Right ventricle myocardium superior (tissue), 1 donor: ENCODE measurements at regions of chr10 and their contacts with region 1.

Region 1: DNA sequence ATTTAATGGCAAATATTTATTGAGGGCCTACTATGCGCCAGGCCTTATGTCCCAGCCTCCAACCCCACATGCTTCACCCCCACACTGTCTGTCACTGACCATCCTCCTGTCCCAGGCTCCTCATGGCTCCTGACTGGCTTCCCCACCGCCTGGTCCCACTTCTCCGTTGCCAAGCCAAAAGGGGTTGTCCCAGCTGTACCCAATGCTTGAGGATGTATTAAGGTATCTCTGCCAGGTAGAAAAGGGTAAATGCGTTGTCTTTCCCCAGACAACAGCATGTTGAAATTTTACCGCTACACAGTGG is 168.8 kb upstream of the FRMD4A start:
- DNase-seq: no peak
- ATAC-seq: no peak

Region 2: GRCh38 chr10:14801723-14802122 is 302.2 kb after region 1 on chr10:
- intact Hi-C with region 1: no loop called
- DNase-seq: no peak
- ATAC-seq: no peak

Region 3: DNA sequence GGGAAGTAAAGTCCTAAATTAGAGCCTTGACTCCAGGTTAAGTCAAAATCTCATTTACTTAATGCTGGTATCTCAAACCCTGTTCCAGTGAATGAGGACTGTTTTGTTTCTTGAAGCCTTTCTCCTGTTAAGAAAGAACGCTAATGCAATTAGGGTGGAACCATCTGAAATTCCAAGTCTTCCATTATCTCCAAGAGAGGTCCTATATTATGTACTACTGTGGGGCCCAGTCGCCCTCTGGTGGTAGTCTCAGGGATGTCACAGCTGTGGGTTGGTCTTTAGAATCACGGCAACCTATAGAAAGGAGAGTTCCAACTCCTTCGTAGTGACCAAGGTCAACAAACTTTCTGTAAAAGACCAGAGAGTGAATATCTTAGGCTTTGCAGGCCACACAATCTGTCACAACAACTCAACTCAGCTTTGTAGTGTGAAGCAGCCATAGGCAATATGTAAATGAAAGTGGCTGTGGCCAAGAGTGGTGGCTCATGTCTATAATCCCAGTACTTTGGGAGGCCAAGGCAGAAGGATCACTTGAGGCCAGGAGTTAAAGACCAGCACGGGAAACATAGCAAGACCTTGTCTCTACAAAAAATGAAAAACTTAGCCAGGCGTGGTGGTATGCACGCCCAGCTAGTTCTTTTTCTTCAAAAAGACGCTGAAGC is 606.9 kb after region 1 on chr10:
- intact Hi-C with region 1: loop called (anchors 5 kb)
- DNase-seq: peak; percentile 78
- ATAC-seq: peak; percentile 90